Right cardiac atrium (tissue), 5 donors: ENCODE measurements at regions of chr4 and their contacts with region 1.

Region 1: GRCh38 chr4:138182838-138183426 is 59.2 kb downstream of the SLC7A11 start:
- DNase-seq: no peak
- ATAC-seq: peak in 1 of 2 donors; percentile 49
- H3K4me3 ChIP-seq: no peak overlapping the region
- H3K27ac ChIP-seq: no peak overlapping the region
- H3K4me1 ChIP-seq: peaks cover 6% of the 10 kb centered on the region
- H3K27me3 ChIP-seq: no peaks in the 10 kb centered on the region

Region 2: GRCh38 chr4:138090150-138090917 is 92.6 kb before region 1 on chr4:
- intact Hi-C with region 1: loop called in 1 of 4 experiments (anchors 5 kb)
- DNase-seq: peak in 1 of 3 donors; percentile 46
- ATAC-seq: peak; percentile 83 to 85
- H3K4me3 ChIP-seq: no peak overlapping the region
- H3K27ac ChIP-seq: no peak overlapping the region
- H3K4me1 ChIP-seq: no peaks in the 10 kb centered on the region
- H3K27me3 ChIP-seq: no peaks in the 10 kb centered on the region